Transverse colon (tissue), 4 donors: ENCODE measurements at regions of chr20 and their contacts with region 1.

Region 1: DNA sequence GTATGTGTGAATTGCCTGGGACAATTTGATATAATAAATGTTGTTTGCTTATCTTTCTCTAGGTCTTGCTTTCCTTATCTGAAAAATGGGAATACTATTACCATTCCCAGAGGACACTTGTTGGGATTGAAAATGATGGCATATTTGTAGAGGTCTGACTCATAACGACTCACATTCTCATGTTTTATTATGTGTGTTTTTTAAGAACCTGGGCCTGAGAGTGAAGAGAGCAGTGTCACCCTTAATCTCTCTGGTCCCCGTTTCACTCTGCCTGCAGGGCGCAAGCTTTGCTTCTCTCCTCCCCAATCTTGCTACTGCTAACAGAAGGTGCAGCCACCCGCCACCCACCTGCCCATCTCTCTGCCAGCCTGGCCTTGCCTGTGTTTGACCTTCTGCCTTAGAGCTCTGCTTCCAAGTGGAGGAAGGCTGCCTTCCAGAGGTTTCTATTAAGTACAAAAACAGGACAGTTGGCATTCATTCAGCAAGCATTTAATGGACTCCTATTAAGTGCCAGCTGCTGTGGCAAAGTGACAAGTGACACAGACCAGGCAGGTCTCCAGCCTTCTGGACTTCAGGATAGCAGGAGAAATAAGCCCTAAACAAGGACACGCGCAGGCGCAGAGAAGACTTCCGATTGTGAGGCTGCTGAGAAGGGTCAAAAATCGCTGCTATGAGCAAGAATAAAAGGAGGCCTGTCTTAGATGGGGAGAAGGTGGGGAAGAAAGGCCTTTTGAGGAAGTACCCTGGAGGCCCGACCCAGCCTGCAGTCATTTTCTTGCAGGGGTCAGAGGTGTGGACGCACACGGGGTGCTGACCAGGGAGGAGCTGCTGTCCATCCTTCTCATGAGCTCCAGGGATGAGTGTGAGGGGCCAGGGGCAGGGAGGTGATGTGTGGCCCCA is 112.5 kb downstream of the JPH2 start:
- DNase-seq: no peak
- H3K4me3 ChIP-seq: no peak overlapping the region
- H3K27ac ChIP-seq: no peak overlapping the region
- H3K4me1 ChIP-seq: no peaks in the 10 kb centered on the region
- H3K27me3 ChIP-seq: no peaks in the 10 kb centered on the region
- CTCF ChIP-seq: no peak
- EP300 ChIP-seq: no peak
- POLR2A ChIP-seq: no peak

Region 2: DNA sequence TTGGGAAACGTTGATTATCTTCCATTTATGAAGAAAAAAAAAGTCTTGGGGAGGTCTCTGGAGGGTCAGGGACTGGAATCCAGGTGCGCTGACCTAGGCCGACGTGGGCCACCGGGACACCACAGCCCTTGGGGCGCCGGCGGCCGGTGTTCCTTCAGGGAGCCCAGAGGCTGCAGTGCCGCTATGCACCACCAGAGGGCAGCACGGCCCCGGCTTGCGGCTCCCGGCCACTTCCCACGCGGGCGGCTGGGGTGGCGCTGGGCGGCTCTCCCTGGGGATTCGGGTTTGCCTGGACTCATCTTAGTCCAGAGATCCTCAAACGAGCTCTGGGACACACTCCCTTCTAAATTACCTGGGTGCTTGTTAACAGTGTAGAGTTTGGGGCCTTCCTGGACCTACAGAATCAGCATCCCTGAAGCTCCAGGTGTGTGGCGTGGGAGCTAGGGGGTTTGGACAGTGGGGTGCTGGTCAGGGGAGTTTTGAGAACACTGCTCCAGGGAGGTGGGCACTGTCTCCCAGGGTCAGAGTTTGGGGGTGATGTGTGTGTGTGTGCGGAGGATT is 324.7 kb before region 1 on chr20:
- in situ Hi-C with region 1: loop called in 1 of 4 experiments (anchors 5 kb)
- intact Hi-C with region 1: no loop called
- DNase-seq: peak; percentile 85
- H3K4me3 ChIP-seq: no peak overlapping the region
- H3K27ac ChIP-seq: no peak overlapping the region
- H3K4me1 ChIP-seq: peaks cover 0 to 3% (median 0%) of the 10 kb centered on the region in 4 donors
- H3K27me3 ChIP-seq: peaks cover 29% of the 10 kb centered on the region
- CTCF ChIP-seq: peak; percentile 96 to 100 (median 100)
- EP300 ChIP-seq: no peak
- POLR2A ChIP-seq: no peak